ENCODE measurements at regions of chr6 and their contacts with region 1.

Region 1: DNA sequence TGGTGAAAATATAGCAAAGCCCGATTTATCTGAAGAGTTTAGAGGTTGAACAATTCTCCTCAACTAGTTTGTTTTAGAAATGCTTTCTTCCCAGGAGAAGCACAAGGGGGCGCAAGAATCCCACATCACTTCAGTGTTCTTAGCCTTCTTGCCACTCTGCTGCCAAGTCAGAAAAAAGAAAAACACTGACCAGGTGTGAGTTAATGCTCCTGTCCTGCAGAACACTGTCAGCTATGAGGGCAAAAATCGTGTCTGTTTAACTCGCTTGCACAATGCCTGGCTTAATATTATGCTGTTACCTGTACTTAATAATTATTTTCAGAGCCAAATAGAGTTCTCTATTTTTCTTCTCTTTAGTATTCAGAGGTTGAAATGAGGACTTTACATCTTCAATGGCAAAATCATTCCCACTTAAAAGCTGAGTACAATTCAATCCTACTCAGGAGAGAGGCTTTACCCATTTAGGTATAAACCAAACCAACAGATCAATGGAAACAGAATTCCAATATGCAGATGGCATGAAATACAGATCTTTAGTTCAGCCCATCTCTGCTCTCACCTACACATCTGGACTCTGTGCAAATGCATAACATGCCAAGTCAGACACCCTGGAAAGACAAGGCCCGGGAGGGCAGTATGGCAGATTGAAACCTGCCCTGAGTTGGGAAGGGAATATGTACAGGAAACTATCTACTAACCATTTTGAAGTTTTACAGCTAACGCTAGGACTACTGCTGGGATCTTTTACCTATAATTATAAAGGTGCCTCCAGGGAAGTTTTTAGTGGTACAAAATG is 71.4 kb upstream of the TULP1 start:
- DNase-seq: peak; percentile 49 to 86 (median 78)
- ATAC-seq: peak; percentile 76
- H3K4me3 ChIP-seq: no peak overlapping the region
- H3K4me3 Mint-ChIP-seq: no peak overlapping the region
- H3K27ac ChIP-seq: no peak overlapping the region
- H3K27ac Mint-ChIP-seq: peak overlapping the region; percentile 86
- H3K4me1 ChIP-seq: peaks cover 47% of the 10 kb centered on the region
- H3K4me1 Mint-ChIP-seq: peaks cover 63% of the 10 kb centered on the region
- H3K27me3 ChIP-seq: no peaks in the 10 kb centered on the region
- H3K27me3 Mint-ChIP-seq: no peaks in the 10 kb centered on the region
- CTCF ChIP-seq: peak; percentile 88

Region 2: GRCh38 chr6:35522660-35523658 is 61.1 kb before region 1 on chr6:
- CTCF ChIA-PET with region 1: interaction called, 16 read pairs
- POLR2A ChIA-PET with region 1: no interaction called
- intact Hi-C with region 1: loop called in 1 of 2 experiments (anchors 2 kb)
- DNase-seq: peak; percentile 46 to 87 (median 76)
- ATAC-seq: peak; percentile 86
- H3K4me3 ChIP-seq: peak overlapping the region in 1 of 2 experiments; percentile 9
- H3K4me3 Mint-ChIP-seq: peak overlapping the region; percentile 69
- H3K27ac ChIP-seq: no peak overlapping the region
- H3K27ac Mint-ChIP-seq: peak overlapping the region; percentile 64
- H3K4me1 ChIP-seq: peaks cover 19% of the 10 kb centered on the region
- H3K4me1 Mint-ChIP-seq: peaks cover 23% of the 10 kb centered on the region
- H3K27me3 ChIP-seq: no peaks in the 10 kb centered on the region
- H3K27me3 Mint-ChIP-seq: no peaks in the 10 kb centered on the region
- CTCF ChIP-seq: peak; percentile 96

Region 3: GRCh38 chr6:35601331-35602132 is 17.4 kb after region 1 on chr6:
- CTCF ChIA-PET with region 1: interaction called, 51 read pairs
- POLR2A ChIA-PET with region 1: interaction called, 81 read pairs
- intact Hi-C with region 1: loop called (anchors 1 to 2 kb)
- DNase-seq: peak; percentile 36 to 94 (median 69)
- ATAC-seq: peak; percentile 78
- H3K4me3 ChIP-seq: peak overlapping the region; percentile 27 to 47
- H3K4me3 Mint-ChIP-seq: peak overlapping the region; percentile 76
- H3K27ac ChIP-seq: peak overlapping the region; percentile 50 to 63
- H3K27ac Mint-ChIP-seq: peak overlapping the region; percentile 93
- H3K4me1 ChIP-seq: peaks cover 89% of the 10 kb centered on the region
- H3K4me1 Mint-ChIP-seq: peaks cover 76% of the 10 kb centered on the region
- H3K27me3 ChIP-seq: no peaks in the 10 kb centered on the region
- H3K27me3 Mint-ChIP-seq: no peaks in the 10 kb centered on the region
- CTCF ChIP-seq: no peak

Region 4: DNA sequence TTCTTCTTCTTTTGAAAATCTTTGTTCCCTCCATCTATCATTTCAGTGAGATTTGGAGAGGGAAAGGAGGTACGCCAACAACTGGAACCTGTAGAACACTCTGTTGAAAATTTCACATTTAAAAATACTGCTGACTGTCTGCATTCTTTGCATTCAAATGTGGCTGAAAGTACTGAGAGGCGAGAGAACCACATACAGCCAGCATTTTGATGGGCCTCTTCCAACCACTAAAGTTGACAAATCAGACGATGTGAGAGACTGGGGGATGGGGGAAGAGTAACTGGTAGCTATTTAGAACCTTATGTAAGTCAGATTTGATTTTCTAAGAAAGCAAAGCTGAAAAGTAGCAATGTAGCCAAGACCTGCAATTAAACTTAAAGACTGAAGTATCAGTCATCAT is 27.1 kb after region 1 on chr6:
- CTCF ChIA-PET with region 1: interaction called, 762 read pairs
- POLR2A ChIA-PET with region 1: interaction called, 4 read pairs
- intact Hi-C with region 1: no loop called
- DNase-seq: peak in 5 of 9 experiments; percentile 20 to 74 (median 41)
- ATAC-seq: peak; percentile 89
- H3K4me3 ChIP-seq: no peak overlapping the region
- H3K4me3 Mint-ChIP-seq: peak overlapping the region; percentile 73
- H3K27ac ChIP-seq: peak overlapping the region in 1 of 2 experiments; percentile 42
- H3K27ac Mint-ChIP-seq: peak overlapping the region; percentile 97
- H3K4me1 ChIP-seq: peaks cover 51% of the 10 kb centered on the region
- H3K4me1 Mint-ChIP-seq: peaks cover 74% of the 10 kb centered on the region
- H3K27me3 ChIP-seq: no peaks in the 10 kb centered on the region
- H3K27me3 Mint-ChIP-seq: no peaks in the 10 kb centered on the region
- CTCF ChIP-seq: no peak

Region 5: DNA sequence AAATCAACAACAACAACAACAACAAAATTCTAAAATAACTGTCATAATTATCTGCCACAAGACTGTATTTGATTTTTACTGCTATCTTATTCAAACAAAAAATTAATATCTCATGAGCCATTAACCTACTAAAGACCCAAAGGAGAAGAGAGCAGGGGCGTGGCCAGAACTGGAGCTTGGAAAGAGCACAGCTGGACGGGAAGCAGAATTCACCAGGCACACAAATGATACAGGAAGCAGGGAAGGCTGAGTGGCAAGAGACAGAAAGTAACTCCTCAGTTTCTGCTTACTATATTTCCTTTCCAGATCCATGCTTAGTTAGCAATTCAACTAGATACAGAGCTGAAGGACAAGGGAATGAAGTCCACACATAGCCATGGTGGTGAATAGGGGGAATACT is 50.2 kb after region 1 on chr6:
- CTCF ChIA-PET with region 1: interaction called, 15 read pairs
- POLR2A ChIA-PET with region 1: no interaction called
- intact Hi-C with region 1: no loop called
- DNase-seq: no peak
- ATAC-seq: no peak
- H3K4me3 ChIP-seq: no peak overlapping the region
- H3K4me3 Mint-ChIP-seq: no peak overlapping the region
- H3K27ac ChIP-seq: no peak overlapping the region
- H3K27ac Mint-ChIP-seq: peak overlapping the region; percentile 85
- H3K4me1 ChIP-seq: no peaks in the 10 kb centered on the region
- H3K4me1 Mint-ChIP-seq: peaks cover 36% of the 10 kb centered on the region
- H3K27me3 ChIP-seq: no peaks in the 10 kb centered on the region
- H3K27me3 Mint-ChIP-seq: no peaks in the 10 kb centered on the region
- CTCF ChIP-seq: no peak

Region 6: GRCh38 chr6:35688581-35689322 is 104.7 kb after region 1 on chr6 and contains the start of gene FKBP5:
- CTCF ChIA-PET with region 1: interaction called, 4 read pairs
- POLR2A ChIA-PET with region 1: no interaction called
- intact Hi-C with region 1: loop called (anchors 2 kb)
- DNase-seq: peak; percentile 65 to 93 (median 87)
- ATAC-seq: peak; percentile 87
- H3K4me3 ChIP-seq: peak within 1 kb of the TSS; percentile 63 to 85
- H3K4me3 Mint-ChIP-seq: peak within 1 kb of the TSS; percentile 98
- H3K27ac ChIP-seq: peak within 1 kb of the TSS; percentile 48 to 64
- H3K27ac Mint-ChIP-seq: peak within 1 kb of the TSS; percentile 96
- H3K4me1 ChIP-seq: peaks cover 14% of the 10 kb centered on the region
- H3K4me1 Mint-ChIP-seq: peaks cover 17% of the 10 kb centered on the region
- H3K27me3 ChIP-seq: no peaks in the 10 kb centered on the region
- H3K27me3 Mint-ChIP-seq: no peaks in the 10 kb centered on the region
- CTCF ChIP-seq: no peak
- total RNA-seq, gene FKBP5: 25.7 to 27.1 TPM

Region 7: DNA sequence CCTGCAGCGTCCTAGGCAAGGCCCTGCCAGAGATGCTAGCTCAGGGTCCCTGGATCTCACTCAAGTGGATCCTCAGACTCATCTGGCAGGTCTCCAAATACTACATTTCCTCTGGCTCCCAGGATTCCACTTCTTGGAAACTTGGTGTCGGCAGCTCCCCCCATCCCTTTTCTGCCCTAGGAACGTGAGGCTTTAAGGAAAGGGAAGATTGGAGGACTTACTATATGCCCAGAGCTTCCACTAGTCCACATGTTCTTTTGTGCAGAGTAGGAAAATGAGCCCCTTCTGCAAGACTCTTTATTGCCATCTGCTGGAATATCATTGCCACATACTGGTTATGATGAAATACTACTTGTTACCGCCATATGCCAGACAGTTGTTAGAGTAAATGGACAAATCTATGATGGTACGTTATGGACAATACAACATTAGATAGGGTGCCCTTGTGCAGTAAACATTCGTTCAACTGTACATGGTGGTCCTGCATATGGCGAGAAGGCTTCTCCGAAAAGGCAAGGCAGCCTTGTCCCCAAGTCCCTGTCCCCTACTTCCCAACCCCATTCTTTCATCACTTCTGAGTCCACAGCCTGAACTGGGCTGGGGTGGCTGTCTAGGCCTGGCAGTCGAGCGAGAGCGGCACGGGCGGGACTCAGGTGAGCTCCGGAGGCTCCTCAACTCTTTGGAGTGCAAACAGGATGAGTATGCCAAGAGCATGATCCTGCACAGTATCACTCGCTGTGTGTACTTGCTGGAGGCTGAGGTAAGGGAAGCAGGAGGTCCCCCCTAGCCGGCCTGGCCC is 153.5 kb after region 1 on chr6:
- CTCF ChIA-PET with region 1: interaction called, 152 read pairs
- POLR2A ChIA-PET with region 1: interaction called, 6 read pairs
- intact Hi-C with region 1: loop called (anchors 1 kb)
- DNase-seq: peak in 4 of 9 experiments; percentile 22 to 83 (median 68)
- ATAC-seq: peak; percentile 72
- H3K4me3 ChIP-seq: no peak overlapping the region
- H3K4me3 Mint-ChIP-seq: no peak overlapping the region
- H3K27ac ChIP-seq: no peak overlapping the region
- H3K27ac Mint-ChIP-seq: peak overlapping the region; percentile 66
- H3K4me1 ChIP-seq: peaks cover 48% of the 10 kb centered on the region
- H3K4me1 Mint-ChIP-seq: peaks cover 42% of the 10 kb centered on the region
- H3K27me3 ChIP-seq: no peaks in the 10 kb centered on the region
- H3K27me3 Mint-ChIP-seq: peaks cover 1% of the 10 kb centered on the region
- CTCF ChIP-seq: peak; percentile 77

Measured in CD8-positive, alpha-beta T cell (primary cell).